Left ventricle myocardium superior (tissue), 1 donor: ENCODE measurements at regions of chr17 and their contacts with region 1.

Region 1: DNA sequence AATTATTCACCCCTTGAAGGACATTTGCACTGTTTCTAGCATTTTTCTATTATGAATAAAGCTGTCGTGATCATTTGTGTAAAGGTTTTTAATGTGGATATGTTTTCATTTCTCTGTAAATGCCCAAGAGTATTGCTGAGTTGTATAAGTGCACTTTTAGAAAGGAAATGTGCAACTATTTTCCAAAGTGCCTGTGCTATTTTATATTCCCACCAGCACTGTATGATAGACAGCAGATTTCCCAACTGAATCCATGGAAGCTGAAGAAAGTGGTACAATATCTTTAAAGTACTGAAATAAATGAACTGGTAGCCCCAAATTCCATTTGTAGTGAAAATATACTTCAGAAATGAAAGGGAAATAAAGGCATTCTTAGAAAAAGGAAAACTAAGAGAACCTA is 238.4 kb downstream of the BCAS3 start:
- DNase-seq: no peak
- ATAC-seq: no peak

Region 2: GRCh38 chr17:60802377-60802776 is 113.7 kb before region 1 on chr17:
- intact Hi-C with region 1: loop called (anchors 10 kb)
- DNase-seq: no peak
- ATAC-seq: no peak